HepG2 (cell line): ENCODE measurements at regions of chr5 and their contacts with region 1.

Region 1: DNA sequence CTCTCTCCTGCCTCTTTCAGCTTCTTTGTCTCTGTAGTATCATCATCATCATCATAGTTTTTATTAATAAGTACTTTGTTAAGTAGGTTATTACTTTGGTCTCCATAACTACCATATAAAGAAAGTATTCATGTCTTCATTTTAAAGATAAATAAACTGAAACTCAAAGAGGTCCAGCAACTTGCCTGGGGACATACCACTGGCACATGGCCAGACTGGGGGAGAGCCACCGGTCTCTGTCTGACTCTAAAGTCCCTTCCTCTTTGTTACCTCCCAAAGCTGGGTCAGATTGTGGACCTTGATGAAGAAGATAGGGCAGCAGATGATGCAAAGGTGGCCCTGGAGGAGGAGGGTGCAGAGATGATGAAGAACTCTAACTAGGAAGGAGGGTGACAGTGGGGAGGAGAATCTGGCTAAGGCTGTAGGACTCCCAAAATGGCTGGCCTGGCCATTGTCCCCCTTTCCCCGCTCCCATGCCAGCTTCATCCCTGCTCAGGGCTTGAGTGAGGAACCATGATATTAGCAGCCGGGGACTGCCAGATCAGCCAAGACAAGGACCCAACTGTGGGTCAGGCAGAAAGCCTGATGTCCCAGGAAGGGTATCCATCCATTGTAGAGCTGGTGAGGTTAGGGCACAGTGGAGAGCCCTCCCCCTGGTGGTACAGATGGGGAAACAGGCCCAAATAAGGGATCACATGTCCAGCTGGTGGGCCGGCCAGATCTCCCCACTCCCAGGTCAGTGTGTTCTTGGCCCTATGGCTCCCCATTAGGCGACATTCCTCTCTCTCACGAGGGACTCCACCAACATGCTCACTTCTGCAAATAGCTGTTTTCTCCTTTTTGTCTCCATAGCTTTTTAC is 8.7 kb downstream of the CDX1 start:
- DNase-seq: peak; percentile 62
- ATAC-seq: peak; percentile 96
- H3K4me3 ChIP-seq: no peak overlapping the region
- H3K27ac ChIP-seq: no peak overlapping the region
- H3K4me1 ChIP-seq: peaks cover 5% of the 10 kb centered on the region
- H3K27me3 ChIP-seq: peaks cover 0 to 28% of the 10 kb centered on the region in 2 experiments; a peak in 3 of 5 replicates
- CTCF ChIP-seq: peak; percentile 84
- EP300 ChIP-seq: no peak
- POLR2A ChIP-seq: no peak
- RAD21 ChIP-seq: peak; percentile 64

Region 2: GRCh38 chr5:150009671-150010387 is 165.5 kb before region 1 on chr5:
- CTCF ChIA-PET with region 1: no interaction called
- POLR2A ChIA-PET with region 1: no interaction called
- in situ Hi-C with region 1: no loop called
- intact Hi-C with region 1: no loop called
- DNase-seq: no peak
- ATAC-seq: no peak
- H3K4me3 ChIP-seq: no peak overlapping the region
- H3K27ac ChIP-seq: no peak overlapping the region
- H3K4me1 ChIP-seq: no peaks in the 10 kb centered on the region
- H3K27me3 ChIP-seq: no peaks in the 10 kb centered on the region
- CTCF ChIP-seq: no peak
- EP300 ChIP-seq: no peak
- POLR2A ChIP-seq: no peak
- RAD21 ChIP-seq: no peak

Region 3: DNA sequence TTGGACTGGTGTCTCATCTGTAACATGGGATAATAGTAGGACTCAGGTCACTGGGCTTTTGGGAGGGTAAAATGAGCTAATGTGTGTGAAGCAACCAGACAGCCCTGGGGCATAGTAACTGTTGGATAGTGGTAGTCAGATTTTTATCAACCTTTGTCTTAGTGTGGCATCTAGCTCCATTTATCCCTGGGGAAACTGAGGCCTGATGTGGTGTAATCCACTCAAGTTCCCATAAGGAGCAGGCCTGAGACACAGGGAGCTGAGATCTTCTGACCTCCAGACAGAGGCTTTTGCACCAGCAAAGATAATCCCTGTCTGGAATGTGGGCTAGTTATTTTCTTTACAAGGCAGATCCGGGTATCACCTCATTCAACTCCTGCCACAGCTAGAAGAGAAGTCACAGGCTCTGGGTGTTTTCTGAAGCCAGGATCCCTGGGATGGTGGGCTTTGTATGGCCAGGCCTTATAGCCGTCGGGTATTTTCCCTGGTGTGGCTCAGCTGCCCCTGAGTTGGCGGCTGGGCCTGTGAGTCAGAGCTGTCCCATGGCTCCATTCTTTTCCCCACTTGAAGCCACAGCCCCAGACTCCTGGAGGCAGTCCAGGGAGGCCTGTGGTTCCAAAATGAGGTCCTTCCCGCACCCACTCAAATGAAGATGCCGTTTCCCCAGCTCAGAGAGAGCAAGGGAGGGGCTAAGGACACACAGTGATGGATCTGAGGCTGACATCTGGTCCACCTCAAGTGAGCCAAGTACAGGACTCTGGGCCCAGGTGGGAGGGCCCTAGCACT is 62.9 kb before region 1 on chr5:
- CTCF ChIA-PET with region 1: no interaction called
- POLR2A ChIA-PET with region 1: no interaction called
- in situ Hi-C with region 1: no loop called
- intact Hi-C with region 1: no loop called
- DNase-seq: no peak
- ATAC-seq: peak; percentile 21
- H3K4me3 ChIP-seq: no peak overlapping the region
- H3K27ac ChIP-seq: no peak overlapping the region
- H3K4me1 ChIP-seq: peaks cover 6% of the 10 kb centered on the region; the same call in 1 of the 2 replicates
- H3K27me3 ChIP-seq: peaks cover 2 to 22% of the 10 kb centered on the region in 2 experiments; a peak in 2 of 5 replicates
- CTCF ChIP-seq: no peak
- EP300 ChIP-seq: no peak
- POLR2A ChIP-seq: no peak
- RAD21 ChIP-seq: no peak

Region 4: DNA sequence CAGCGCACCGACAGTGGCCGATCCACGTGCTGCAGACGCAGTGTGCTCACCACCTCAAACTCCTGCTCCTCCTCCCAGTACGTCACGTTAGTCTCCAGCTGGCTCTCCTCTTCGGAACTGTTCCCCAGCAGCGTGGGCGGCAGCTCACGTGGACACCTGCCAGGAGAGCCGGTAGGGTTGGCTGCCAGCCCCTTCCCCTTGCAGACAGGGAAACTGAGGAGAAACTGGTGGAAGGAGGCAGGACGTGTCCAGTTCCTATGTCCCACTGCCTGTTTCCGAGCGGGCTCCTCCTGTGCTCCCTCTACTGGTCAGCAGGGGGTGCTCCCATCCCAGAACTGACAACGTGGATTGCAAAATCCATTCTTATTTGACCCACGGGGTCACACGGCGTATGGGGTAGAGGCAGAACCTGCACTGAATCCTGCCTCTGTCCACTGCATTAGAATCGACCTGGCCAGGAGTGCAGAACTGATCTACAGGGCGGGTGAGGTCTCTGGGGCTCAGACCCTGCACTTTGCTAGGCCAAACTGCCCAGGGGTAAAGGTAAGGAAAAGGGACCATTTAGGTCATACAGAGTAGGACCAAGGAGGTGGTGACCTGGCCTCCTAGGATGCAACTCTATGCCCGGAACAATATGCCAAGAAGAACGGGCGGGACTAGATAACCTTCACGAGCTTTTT is 45.4 kb before region 1 on chr5:
- CTCF ChIA-PET with region 1: interaction called, 30 read pairs
- POLR2A ChIA-PET with region 1: no interaction called
- in situ Hi-C with region 1: loop called (anchors 5 kb)
- intact Hi-C with region 1: loop called (anchors 1 kb)
- DNase-seq: peak; percentile 67
- ATAC-seq: peak; percentile 88
- H3K4me3 ChIP-seq: no peak overlapping the region
- H3K27ac ChIP-seq: no peak overlapping the region
- H3K4me1 ChIP-seq: peaks cover 43% of the 10 kb centered on the region
- H3K27me3 ChIP-seq: no peaks in the 10 kb centered on the region
- CTCF ChIP-seq: peak; percentile 99
- EP300 ChIP-seq: 0 out of 4 replicates have a peak, but pooled peaks have one; percentile 35 to 39
- POLR2A ChIP-seq: no peak
- RAD21 ChIP-seq: peak; percentile 98

Region 5: GRCh38 chr5:150137168-150137957 is 37.9 kb before region 1 on chr5:
- CTCF ChIA-PET with region 1: interaction called, 5 read pairs
- POLR2A ChIA-PET with region 1: interaction called, 3 read pairs
- in situ Hi-C with region 1: no loop called
- intact Hi-C with region 1: loop called (anchors 1 kb)
- DNase-seq: peak; percentile 97
- ATAC-seq: peak; percentile 92
- H3K4me3 ChIP-seq: peak overlapping the region; percentile 48 to 76 (median 64)
- H3K27ac ChIP-seq: peak overlapping the region; percentile 91
- H3K4me1 ChIP-seq: peaks cover 83% of the 10 kb centered on the region
- H3K27me3 ChIP-seq: no peaks in the 10 kb centered on the region
- CTCF ChIP-seq: no peak; the same call in 1 of the 2 replicates
- EP300 ChIP-seq: peak; percentile 18 to 93; a peak in 3 of 4 replicates
- POLR2A ChIP-seq: peak in 1 of 2 experiments; percentile 65; a peak in 2 of 4 replicates
- RAD21 ChIP-seq: peak; percentile 33; the same call in 1 of the 2 replicates